Adrenal gland (tissue), 19 donors: ENCODE measurements at regions of chr1 and their contacts with region 1.

Region 1: GRCh38 chr1:88216441-88216840 is 467.6 kb upstream of the PKN2 start:
- DNase-seq: no peak
- H3K4me3 ChIP-seq: no peak overlapping the region
- H3K27ac ChIP-seq: no peak overlapping the region
- H3K4me1 ChIP-seq: no peaks in the 10 kb centered on the region
- H3K27me3 ChIP-seq: no peaks in the 10 kb centered on the region
- CTCF ChIP-seq: no peak
- POLR2A ChIP-seq: no peak

Region 2: GRCh38 chr1:88237058-88237457 is 20.6 kb after region 1 on chr1:
- intact Hi-C with region 1: loop called in 1 of 2 experiments (anchors 2 kb)
- DNase-seq: no peak
- H3K4me3 ChIP-seq: no peak overlapping the region
- H3K27ac ChIP-seq: no peak overlapping the region
- H3K4me1 ChIP-seq: no peaks in the 10 kb centered on the region
- H3K27me3 ChIP-seq: no peaks in the 10 kb centered on the region
- CTCF ChIP-seq: no peak
- POLR2A ChIP-seq: no peak